B cell (primary cell): ENCODE measurements at regions of chr10 and their contacts with region 1.

Region 1: DNA sequence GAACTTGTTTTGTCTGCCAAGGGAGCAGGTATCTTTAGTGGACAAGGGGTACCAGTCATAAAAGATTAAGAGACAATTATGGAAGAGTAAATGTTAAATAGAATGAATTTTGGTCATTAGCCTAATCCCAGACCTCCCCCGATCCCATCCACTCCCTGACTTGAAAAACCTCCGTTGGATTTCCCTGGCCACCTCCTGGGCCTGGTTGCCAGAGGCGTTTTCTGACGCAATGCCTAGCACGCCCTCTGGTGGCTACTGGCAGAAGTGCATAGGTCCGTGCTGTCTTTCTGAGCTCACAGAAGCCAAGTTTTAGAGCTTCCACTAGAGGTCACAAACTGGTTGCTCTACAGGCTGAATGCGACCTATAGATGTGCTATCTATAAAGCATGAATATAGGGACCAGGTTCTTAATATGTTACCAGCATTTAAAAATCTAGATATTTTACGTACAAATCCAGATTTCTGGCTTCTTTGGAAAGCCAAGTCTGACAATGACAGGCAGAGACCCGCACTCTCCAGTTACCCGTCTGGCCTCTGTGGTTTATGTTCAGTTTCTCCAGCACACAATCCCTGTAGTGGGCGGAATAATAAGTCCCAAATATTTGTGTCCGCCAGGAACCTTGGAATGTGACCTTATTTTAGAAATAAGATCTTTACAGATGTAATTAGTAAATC is 39.8 kb downstream of the SPOCK2 start:
- DNase-seq: peak; percentile 91
- ATAC-seq: peak; percentile 98
- H3K4me3 ChIP-seq: no peak overlapping the region
- H3K4me3 Mint-ChIP-seq: no peak overlapping the region
- H3K27ac ChIP-seq: no peak overlapping the region
- H3K27ac Mint-ChIP-seq: no peak overlapping the region
- H3K4me1 ChIP-seq: no peaks in the 10 kb centered on the region
- H3K4me1 Mint-ChIP-seq: no peaks in the 10 kb centered on the region
- H3K27me3 ChIP-seq: no peaks in the 10 kb centered on the region
- H3K27me3 Mint-ChIP-seq: no peaks in the 10 kb centered on the region
- CTCF ChIP-seq: peak; percentile 99

Region 2: GRCh38 chr10:71998840-71999194 is 49.8 kb before region 1 on chr10:
- CTCF ChIA-PET with region 1: no interaction called
- POLR2A ChIA-PET with region 1: no interaction called
- intact Hi-C with region 1: no loop called
- DNase-seq: no peak
- ATAC-seq: no peak
- H3K4me3 ChIP-seq: no peak overlapping the region
- H3K4me3 Mint-ChIP-seq: no peak overlapping the region
- H3K27ac ChIP-seq: no peak overlapping the region
- H3K27ac Mint-ChIP-seq: no peak overlapping the region
- H3K4me1 ChIP-seq: peaks cover 18 to 21% of the 10 kb centered on the region in 2 donors
- H3K4me1 Mint-ChIP-seq: peaks cover 21% of the 10 kb centered on the region
- H3K27me3 ChIP-seq: peaks cover 0 to 3% (median 0%) of the 10 kb centered on the region in 4 experiments
- H3K27me3 Mint-ChIP-seq: peaks cover 7% of the 10 kb centered on the region
- CTCF ChIP-seq: no peak

Region 3: GRCh38 chr10:72038458-72039001 is 10.1 kb before region 1 on chr10:
- CTCF ChIA-PET with region 1: interaction called, 16 read pairs
- POLR2A ChIA-PET with region 1: no interaction called
- intact Hi-C with region 1: no loop called
- DNase-seq: no peak
- ATAC-seq: no peak
- H3K4me3 ChIP-seq: no peak overlapping the region
- H3K4me3 Mint-ChIP-seq: no peak overlapping the region
- H3K27ac ChIP-seq: no peak overlapping the region
- H3K27ac Mint-ChIP-seq: no peak overlapping the region
- H3K4me1 ChIP-seq: no peaks in the 10 kb centered on the region
- H3K4me1 Mint-ChIP-seq: no peaks in the 10 kb centered on the region
- H3K27me3 ChIP-seq: no peaks in the 10 kb centered on the region
- H3K27me3 Mint-ChIP-seq: no peaks in the 10 kb centered on the region
- CTCF ChIP-seq: no peak

Region 4: DNA sequence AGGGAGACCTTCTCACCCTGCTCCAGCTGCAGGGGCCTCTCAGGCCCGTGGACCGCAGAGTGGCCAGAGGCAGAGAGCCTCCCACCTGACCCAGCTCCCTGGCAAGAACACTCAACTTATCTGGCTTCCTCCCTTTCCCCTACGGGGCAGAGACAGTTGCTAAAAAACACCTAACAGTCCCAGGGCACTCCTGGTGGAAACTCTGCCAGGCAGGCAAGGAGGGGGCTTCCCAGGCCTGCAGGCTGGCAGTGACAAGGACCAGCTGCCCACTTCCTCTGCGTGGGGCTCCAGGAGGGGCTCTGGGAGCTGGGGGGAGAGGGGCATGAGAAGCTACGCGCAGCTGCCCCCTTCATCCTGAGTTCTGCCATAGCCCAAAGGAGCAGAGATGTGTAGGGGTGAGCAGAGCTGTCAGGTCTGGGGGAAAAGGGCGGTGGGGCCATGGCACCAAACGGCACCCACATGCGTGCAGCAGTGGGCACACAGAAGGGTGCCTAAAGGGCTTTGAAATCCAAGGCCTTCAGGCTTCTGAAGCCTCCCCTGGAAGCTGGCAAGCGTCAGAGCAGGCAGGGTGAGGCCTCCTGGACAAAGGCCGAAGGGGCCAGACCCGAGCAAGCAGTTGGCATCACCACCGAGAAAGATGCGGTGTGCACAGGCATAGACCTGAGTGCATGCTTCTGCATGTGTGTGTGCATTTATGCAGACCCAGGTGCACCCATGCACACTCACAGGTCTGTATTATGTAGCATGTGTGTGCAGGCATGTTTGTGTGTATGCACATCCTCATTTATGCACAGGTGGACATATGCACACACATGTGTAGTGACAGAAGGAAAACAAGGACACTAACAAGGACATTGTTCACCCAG is 25.4 kb after region 1 on chr10:
- CTCF ChIA-PET with region 1: interaction called, 11 read pairs
- POLR2A ChIA-PET with region 1: no interaction called
- intact Hi-C with region 1: no loop called
- DNase-seq: no peak
- ATAC-seq: no peak
- H3K4me3 ChIP-seq: no peak overlapping the region
- H3K4me3 Mint-ChIP-seq: no peak overlapping the region
- H3K27ac ChIP-seq: peak overlapping the region in 1 of 2 donors; percentile 12
- H3K27ac Mint-ChIP-seq: peak overlapping the region; percentile 41
- H3K4me1 ChIP-seq: peaks cover 16 to 22% of the 10 kb centered on the region in 2 donors
- H3K4me1 Mint-ChIP-seq: peaks cover 32% of the 10 kb centered on the region
- H3K27me3 ChIP-seq: no peaks in the 10 kb centered on the region
- H3K27me3 Mint-ChIP-seq: no peaks in the 10 kb centered on the region
- CTCF ChIP-seq: no peak

Region 5: DNA sequence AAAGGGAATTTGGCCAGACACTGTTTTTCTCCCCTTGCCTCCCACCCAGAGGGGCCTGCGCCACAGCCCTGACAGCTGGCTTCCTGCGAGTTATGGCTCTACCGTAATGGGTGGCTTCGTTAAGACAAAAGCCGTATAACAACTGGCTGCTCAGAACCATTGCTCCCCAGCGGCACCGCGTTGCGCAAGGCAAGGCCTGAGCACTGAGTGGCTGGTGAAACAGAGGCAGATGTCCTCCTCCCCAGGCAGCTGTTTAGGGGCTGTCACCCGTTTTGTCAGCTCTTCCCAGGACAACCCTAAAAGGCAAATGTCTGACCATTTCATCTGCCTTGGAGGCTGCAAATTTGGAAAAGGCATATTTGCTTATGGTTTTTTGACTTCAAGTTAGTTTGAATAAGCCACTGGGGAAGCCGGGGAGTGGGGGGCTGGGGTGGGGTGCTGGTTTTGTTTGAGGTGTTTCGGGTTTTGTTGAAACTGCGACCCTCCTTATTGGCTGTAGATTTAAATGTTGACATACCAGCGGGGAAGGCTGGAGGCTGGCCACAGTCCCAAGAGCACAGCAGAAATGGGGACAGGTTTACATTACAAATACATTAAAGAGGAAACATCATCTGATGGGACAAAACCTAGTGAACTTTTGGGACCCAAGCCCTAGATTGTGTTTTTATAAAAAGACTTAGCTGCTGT is 40.4 kb after region 1 on chr10:
- CTCF ChIA-PET with region 1: interaction called, 19 read pairs
- POLR2A ChIA-PET with region 1: interaction called, 13 read pairs
- intact Hi-C with region 1: loop called (anchors 1 kb)
- DNase-seq: no peak
- ATAC-seq: no peak
- H3K4me3 ChIP-seq: peak overlapping the region in 4 of 5 experiments; percentile 79 to 93 (median 88)
- H3K4me3 Mint-ChIP-seq: peak overlapping the region; percentile 100
- H3K27ac ChIP-seq: peak overlapping the region; percentile 89 to 92
- H3K27ac Mint-ChIP-seq: peak overlapping the region; percentile 100
- H3K4me1 ChIP-seq: peaks cover 24 to 33% of the 10 kb centered on the region in 2 donors
- H3K4me1 Mint-ChIP-seq: peaks cover 47% of the 10 kb centered on the region
- H3K27me3 ChIP-seq: no peaks in the 10 kb centered on the region
- H3K27me3 Mint-ChIP-seq: no peaks in the 10 kb centered on the region
- CTCF ChIP-seq: no peak

Region 6: GRCh38 chr10:72158176-72158575 is 109.6 kb after region 1 on chr10:
- CTCF ChIA-PET with region 1: no interaction called
- POLR2A ChIA-PET with region 1: no interaction called
- intact Hi-C with region 1: no loop called
- DNase-seq: no peak
- ATAC-seq: no peak
- H3K4me3 ChIP-seq: no peak overlapping the region
- H3K4me3 Mint-ChIP-seq: no peak overlapping the region
- H3K27ac ChIP-seq: no peak overlapping the region
- H3K27ac Mint-ChIP-seq: no peak overlapping the region
- H3K4me1 ChIP-seq: no peaks in the 10 kb centered on the region
- H3K4me1 Mint-ChIP-seq: peaks cover 3% of the 10 kb centered on the region
- H3K27me3 ChIP-seq: no peaks in the 10 kb centered on the region
- H3K27me3 Mint-ChIP-seq: no peaks in the 10 kb centered on the region
- CTCF ChIP-seq: no peak

Region 7: DNA sequence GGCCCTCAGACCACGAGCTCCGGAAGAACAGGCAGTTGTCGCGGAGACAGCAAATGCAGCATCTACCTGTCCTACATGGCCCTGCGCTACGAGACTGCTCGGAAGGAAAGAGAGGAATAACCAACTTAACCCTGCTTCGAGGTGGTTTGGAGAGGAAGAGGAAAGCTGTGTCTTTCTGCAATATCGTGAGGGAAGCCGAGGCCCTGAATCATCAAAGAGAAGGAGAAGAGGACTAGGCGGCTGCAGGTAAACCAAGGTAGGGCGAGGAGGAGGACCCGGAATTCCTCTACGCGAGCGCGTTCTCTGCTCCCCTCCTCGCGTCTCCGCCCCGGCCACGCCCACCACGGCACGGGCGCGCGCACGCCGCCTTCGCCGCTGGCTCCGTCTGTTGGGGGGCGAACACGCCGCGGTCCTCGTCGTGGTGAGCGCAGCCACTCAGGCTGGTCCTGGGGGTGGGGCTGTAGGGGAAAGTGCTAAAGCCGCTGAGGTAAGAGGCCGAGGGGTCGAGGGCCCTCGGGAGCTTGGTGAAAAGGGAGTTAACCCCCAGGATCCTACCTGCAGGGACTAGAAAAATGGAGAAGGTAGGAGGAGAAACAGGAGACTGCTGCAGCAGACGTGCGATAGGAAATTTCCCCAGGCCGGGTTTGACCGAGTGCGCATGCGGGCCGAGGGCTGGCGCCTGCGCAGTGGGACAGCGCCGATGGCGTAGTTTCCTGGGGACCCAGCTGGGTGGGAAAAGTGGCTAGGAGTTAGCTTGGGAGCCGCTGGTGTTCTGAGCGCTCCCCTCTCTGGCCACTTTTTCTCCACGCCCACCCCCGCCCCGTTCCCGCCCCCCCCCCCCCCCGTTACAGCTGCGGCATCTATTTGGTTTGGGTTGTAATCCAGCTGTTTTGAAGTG is 167.3 kb after region 1 on chr10 and contains the starts of genes ANAPC16 and ASCC1:
- CTCF ChIA-PET with region 1: interaction called, 25 read pairs
- POLR2A ChIA-PET with region 1: no interaction called
- intact Hi-C with region 1: loop called (anchors 2 kb)
- DNase-seq: peak; percentile 97
- ATAC-seq: peak; percentile 78
- H3K4me3 ChIP-seq: peak within 1 kb of the TSS; percentile 79 to 92 (median 83)
- H3K4me3 Mint-ChIP-seq: peak within 1 kb of the TSS; percentile 99
- H3K27ac ChIP-seq: peak within 1 kb of the TSS; percentile 92
- H3K27ac Mint-ChIP-seq: peak within 1 kb of the TSS; percentile 100
- H3K4me1 ChIP-seq: peaks cover 42 to 54% of the 10 kb centered on the region in 2 donors
- H3K4me1 Mint-ChIP-seq: peaks cover 54% of the 10 kb centered on the region
- H3K27me3 ChIP-seq: no peaks in the 10 kb centered on the region
- H3K27me3 Mint-ChIP-seq: no peaks in the 10 kb centered on the region
- CTCF ChIP-seq: no peak
- total RNA-seq, gene ANAPC16: 128 and 132 TPM in 2 replicates
- total RNA-seq, gene ASCC1: 28.1 and 31.3 TPM in 2 replicates

Region 8: DNA sequence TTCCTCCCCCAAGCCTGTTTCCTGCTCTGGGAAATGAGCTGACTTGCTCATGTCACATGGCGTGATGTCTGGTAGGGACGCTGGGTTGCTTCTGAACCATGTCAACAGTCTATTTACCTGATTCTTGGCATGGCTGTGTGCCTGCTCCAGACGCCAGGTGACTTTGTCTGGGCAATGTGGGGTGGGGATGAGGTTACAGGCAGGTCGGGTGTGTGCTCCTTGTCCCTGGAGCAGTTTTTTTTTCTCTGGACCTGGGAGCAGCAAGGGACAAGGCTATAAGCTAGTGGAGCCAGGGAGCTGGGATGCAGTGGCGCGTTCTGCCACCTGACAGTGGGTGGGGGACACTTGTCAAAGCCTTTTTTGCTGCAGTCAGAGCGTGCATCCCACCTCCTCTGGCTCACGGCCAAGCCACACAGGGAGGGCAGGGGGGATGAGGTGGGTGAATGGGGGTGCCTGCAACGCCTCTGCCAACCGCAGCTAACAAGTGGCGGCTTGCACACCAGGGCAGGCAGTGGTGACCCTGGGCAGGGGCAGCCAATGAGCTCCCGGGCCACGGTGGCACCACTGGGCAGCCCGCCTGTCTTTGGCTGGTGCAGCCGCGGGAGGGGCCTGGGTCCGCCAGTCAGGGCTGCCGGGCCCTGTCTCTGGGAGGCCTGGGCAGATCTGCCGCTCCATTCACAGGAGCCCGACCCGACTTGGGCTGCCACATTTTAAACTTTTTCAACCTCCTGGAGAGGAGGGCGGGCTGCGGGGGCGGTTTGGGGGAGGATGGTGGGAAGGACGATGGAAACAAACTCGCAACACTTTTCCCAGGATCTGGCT is 283.2 kb after region 1 on chr10:
- CTCF ChIA-PET with region 1: interaction called, 58 read pairs
- POLR2A ChIA-PET with region 1: interaction called, 5 read pairs
- intact Hi-C with region 1: no loop called
- DNase-seq: peak; percentile 93
- ATAC-seq: peak; percentile 79
- H3K4me3 ChIP-seq: peak overlapping the region in 4 of 5 experiments; percentile 31 to 38 (median 35)
- H3K4me3 Mint-ChIP-seq: peak overlapping the region; percentile 76
- H3K27ac ChIP-seq: peak overlapping the region; percentile 83 to 86
- H3K27ac Mint-ChIP-seq: peak overlapping the region; percentile 96
- H3K4me1 ChIP-seq: peaks cover 84 to 100% of the 10 kb centered on the region in 2 donors
- H3K4me1 Mint-ChIP-seq: peaks cover 90% of the 10 kb centered on the region
- H3K27me3 ChIP-seq: no peaks in the 10 kb centered on the region
- H3K27me3 Mint-ChIP-seq: no peaks in the 10 kb centered on the region
- CTCF ChIP-seq: peak; percentile 55